Posterior vena cava (tissue), 2 donors: ENCODE measurements at regions of chr11 and their contacts with region 1.

Region 1: GRCh38 chr11:96054870-96055705 is 131.2 kb upstream of the MTMR2 start:
- DNase-seq: no peak

Region 2: GRCh38 chr11:95863486-95864140 is 191.5 kb before region 1 on chr11:
- intact Hi-C with region 1: no loop called
- DNase-seq: no peak

Region 3: DNA sequence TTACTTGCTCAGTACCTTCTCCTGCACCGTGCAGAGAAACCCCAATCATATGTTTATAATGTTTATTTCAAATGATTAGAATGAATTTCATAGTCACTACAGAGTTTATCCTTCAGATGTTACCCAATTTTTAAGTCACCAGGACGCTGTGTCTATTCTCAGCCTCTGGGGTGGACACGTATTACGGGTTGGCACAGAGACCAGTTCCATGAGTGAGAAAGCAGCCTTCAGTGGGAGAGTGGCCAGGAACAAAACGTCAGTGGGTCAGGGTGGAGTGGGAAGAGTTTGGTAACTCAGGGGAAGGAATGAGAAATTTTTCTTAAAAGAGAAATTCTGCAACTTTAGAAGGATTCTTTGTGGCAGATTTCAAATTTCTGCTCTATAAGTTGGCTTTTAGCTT is 54.1 kb before region 1 on chr11:
- intact Hi-C with region 1: loop called in 1 of 2 experiments (anchors 10 kb)
- DNase-seq: peak; percentile 92

Region 4: DNA sequence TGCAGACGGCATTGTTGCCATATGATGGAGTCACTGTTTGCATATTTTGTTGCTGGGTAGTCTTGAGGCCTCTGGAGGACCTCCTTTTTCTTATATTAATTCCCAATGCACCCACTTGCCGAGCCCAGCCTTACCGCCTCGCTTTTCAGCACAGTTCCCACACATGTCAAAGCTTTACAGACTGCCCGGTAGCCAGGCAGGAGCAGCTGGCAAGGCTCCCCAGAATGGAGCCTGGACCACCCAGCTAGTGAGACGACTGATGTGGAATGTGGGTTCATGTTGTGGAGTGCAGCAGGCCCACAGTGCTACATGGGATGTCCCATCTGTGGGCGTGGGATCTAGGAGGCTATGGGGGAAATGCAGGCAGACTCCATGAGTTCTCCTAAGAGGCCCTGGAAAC is 31.8 kb before region 1 on chr11:
- intact Hi-C with region 1: no loop called
- DNase-seq: no peak

Region 5: GRCh38 chr11:96342961-96343711 is 288.0 kb after region 1 on chr11 and contains the start of gene MAML2:
- intact Hi-C with region 1: loop called (anchors 5 kb)
- DNase-seq: peak; percentile 97
- total RNA-seq, gene MAML2: 13.1 to 16.2 TPM